Mammary epithelial cell (primary cell): ENCODE measurements at regions of chr5 and their contacts with region 1.

Region 1: GRCh38 chr5:126587551-126588390 is 7.2 kb downstream of the ALDH7A1 start:
- DNase-seq: no peak
- H3K4me3 ChIP-seq: no peak overlapping the region
- H3K27ac ChIP-seq: no peak overlapping the region
- H3K4me1 ChIP-seq: peaks cover 6% of the 10 kb centered on the region
- H3K27me3 ChIP-seq: no peaks in the 10 kb centered on the region
- CTCF ChIP-seq: no peak

Region 2: GRCh38 chr5:126544087-126544740 is 43.6 kb before region 1 on chr5:
- CTCF ChIA-PET with region 1: no interaction called
- dilution Hi-C with region 1: loop called (anchors 5 kb)
- in situ Hi-C with region 1: no loop called
- intact Hi-C with region 1: no loop called
- DNase-seq: peak; percentile 25
- H3K4me3 ChIP-seq: no peak overlapping the region
- H3K27ac ChIP-seq: no peak overlapping the region
- H3K4me1 ChIP-seq: no peaks in the 10 kb centered on the region
- H3K27me3 ChIP-seq: no peaks in the 10 kb centered on the region
- CTCF ChIP-seq: peak; percentile 42 to 64